AG04449 (cell line): ENCODE measurements at regions of chr12 and their contacts with region 1.

Region 1: GRCh38 chr12:43338848-43339526 is 213.0 kb downstream of the ADAMTS20 start:
- DNase-seq: no peak
- H3K4me3 ChIP-seq: no peak overlapping the region
- CTCF ChIP-seq: peak; percentile 57

Region 2: GRCh38 chr12:42482445-42483237 is 856.3 kb before region 1 on chr12:
- CTCF ChIA-PET with region 1: interaction called, 18 read pairs
- POLR2A ChIA-PET with region 1: no interaction called
- DNase-seq: no peak
- H3K4me3 ChIP-seq: peak overlapping the region; percentile 73
- CTCF ChIP-seq: peak; percentile 94

Region 3: GRCh38 chr12:43127886-43128549 is 211.0 kb before region 1 on chr12:
- CTCF ChIA-PET with region 1: no interaction called
- POLR2A ChIA-PET with region 1: no interaction called
- DNase-seq: no peak
- H3K4me3 ChIP-seq: no peak overlapping the region
- CTCF ChIP-seq: no peak

Region 4: GRCh38 chr12:43306066-43306465 is 32.9 kb before region 1 on chr12:
- CTCF ChIA-PET with region 1: interaction called, 11 read pairs
- POLR2A ChIA-PET with region 1: no interaction called
- DNase-seq: peak; percentile 89
- H3K4me3 ChIP-seq: no peak overlapping the region
- CTCF ChIP-seq: no peak

Region 5: GRCh38 chr12:43320281-43320680 is 18.7 kb before region 1 on chr12:
- CTCF ChIA-PET with region 1: interaction called, 13 read pairs
- POLR2A ChIA-PET with region 1: no interaction called
- DNase-seq: no peak
- H3K4me3 ChIP-seq: no peak overlapping the region
- CTCF ChIP-seq: no peak

Region 6: GRCh38 chr12:43349863-43350262 is 10.9 kb after region 1 on chr12:
- CTCF ChIA-PET with region 1: interaction called, 17 read pairs
- POLR2A ChIA-PET with region 1: no interaction called
- DNase-seq: no peak
- H3K4me3 ChIP-seq: no peak overlapping the region
- CTCF ChIP-seq: no peak

Region 7: GRCh38 chr12:43361031-43361710 is 22.2 kb after region 1 on chr12:
- CTCF ChIA-PET with region 1: no interaction called
- POLR2A ChIA-PET with region 1: no interaction called
- DNase-seq: no peak
- H3K4me3 ChIP-seq: no peak overlapping the region
- CTCF ChIP-seq: no peak